PC-3 (cell line): ENCODE measurements at regions of chr2 and their contacts with region 1.

Region 1: DNA sequence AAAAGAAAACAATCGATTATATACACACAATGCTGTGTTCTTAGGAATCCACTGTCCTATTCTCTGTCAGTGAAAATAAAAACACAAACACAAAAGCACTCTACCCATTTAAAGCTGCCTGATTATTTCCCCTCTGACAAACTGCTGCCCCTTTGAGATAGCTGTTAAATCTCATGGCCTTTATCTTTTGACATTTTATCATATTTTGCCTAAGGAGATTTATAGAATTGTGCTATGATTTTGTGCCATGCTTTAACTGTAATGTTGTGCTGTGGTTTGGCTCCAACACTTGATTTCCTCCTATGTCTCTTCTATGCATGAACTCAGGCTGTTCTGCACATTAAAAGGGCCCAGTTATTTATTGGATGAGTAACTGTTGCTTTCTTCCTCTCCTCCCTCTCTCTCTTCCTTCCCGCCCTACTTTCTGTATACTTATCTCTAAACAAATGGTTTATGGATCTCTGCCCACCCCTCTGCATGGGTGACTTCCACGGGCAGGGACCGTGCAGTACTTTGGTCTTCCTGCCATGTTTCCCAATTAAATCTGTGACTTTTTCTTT is 1096.6 kb downstream of the TSN start:
- DNase-seq: peak; percentile 87
- ATAC-seq: peak; percentile 74
- H3K4me3 ChIP-seq: no peak overlapping the region
- H3K27ac ChIP-seq: peak overlapping the region; percentile 85
- H3K4me1 ChIP-seq: peaks cover 50% of the 10 kb centered on the region
- H3K27me3 ChIP-seq: no peaks in the 10 kb centered on the region
- CTCF ChIP-seq: no peak

Region 2: DNA sequence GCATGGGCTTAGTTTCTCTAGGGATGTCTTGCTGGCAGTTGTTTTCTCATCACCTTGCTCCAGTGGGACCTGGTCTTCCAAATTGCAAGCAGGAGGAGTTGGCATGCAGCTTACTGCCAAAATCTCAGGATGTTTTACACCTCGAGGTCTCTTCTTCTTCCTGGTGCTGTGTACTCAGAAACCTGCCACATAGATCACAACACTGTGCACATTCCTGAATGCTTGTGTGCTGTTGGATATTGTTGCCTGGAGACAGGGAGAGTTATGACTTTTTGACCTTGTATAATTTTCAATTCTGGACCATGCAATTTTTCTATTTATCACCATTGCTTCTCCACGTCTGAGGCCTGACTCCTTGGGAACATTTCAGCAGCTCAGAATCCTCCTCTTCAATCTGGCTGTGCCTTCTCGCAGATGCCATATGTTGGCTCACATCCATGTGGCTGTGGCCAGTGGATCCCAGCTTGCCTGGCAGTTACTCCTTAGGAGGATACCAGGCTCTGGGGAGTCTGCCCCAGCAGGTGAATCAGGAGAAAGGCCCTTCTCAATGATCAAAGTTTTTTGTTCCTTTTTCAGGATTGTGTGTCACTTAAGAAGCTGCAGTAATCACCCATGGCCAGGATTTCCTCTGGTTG is 607.3 kb before region 1 on chr2:
- CTCF ChIA-PET with region 1: no interaction called
- POLR2A ChIA-PET with region 1: no interaction called
- intact Hi-C with region 1: no loop called
- DNase-seq: no peak
- ATAC-seq: no peak
- H3K4me3 ChIP-seq: no peak overlapping the region
- H3K27ac ChIP-seq: no peak overlapping the region
- H3K4me1 ChIP-seq: no peaks in the 10 kb centered on the region
- H3K27me3 ChIP-seq: peaks cover 7% of the 10 kb centered on the region; the same call in 1 of the 2 replicates
- CTCF ChIP-seq: no peak

Region 3: GRCh38 chr2:122543815-122544214 is 308.2 kb before region 1 on chr2:
- CTCF ChIA-PET with region 1: no interaction called
- POLR2A ChIA-PET with region 1: interaction called, 18 read pairs
- intact Hi-C with region 1: no loop called
- DNase-seq: peak; percentile 28
- ATAC-seq: no peak
- H3K4me3 ChIP-seq: no peak overlapping the region
- H3K27ac ChIP-seq: no peak overlapping the region
- H3K4me1 ChIP-seq: no peaks in the 10 kb centered on the region
- H3K27me3 ChIP-seq: no peaks in the 10 kb centered on the region
- CTCF ChIP-seq: no peak

Region 4: GRCh38 chr2:122831649-122832048 is 20.4 kb before region 1 on chr2:
- CTCF ChIA-PET with region 1: no interaction called
- POLR2A ChIA-PET with region 1: no interaction called
- intact Hi-C with region 1: loop called (anchors 2 kb)
- DNase-seq: peak; percentile 93
- ATAC-seq: peak; percentile 90
- H3K4me3 ChIP-seq: no peak overlapping the region
- H3K27ac ChIP-seq: peak overlapping the region; percentile 45
- H3K4me1 ChIP-seq: peaks cover 28% of the 10 kb centered on the region
- H3K27me3 ChIP-seq: no peaks in the 10 kb centered on the region
- CTCF ChIP-seq: no peak

Region 5: GRCh38 chr2:123095219-123095835 is 243.3 kb after region 1 on chr2:
- CTCF ChIA-PET with region 1: no interaction called
- POLR2A ChIA-PET with region 1: no interaction called
- intact Hi-C with region 1: loop called (anchors 5 kb)
- DNase-seq: no peak
- ATAC-seq: no peak
- H3K4me3 ChIP-seq: no peak overlapping the region
- H3K27ac ChIP-seq: no peak overlapping the region
- H3K4me1 ChIP-seq: peaks cover 38% of the 10 kb centered on the region
- H3K27me3 ChIP-seq: no peaks in the 10 kb centered on the region
- CTCF ChIP-seq: no peak

Region 6: DNA sequence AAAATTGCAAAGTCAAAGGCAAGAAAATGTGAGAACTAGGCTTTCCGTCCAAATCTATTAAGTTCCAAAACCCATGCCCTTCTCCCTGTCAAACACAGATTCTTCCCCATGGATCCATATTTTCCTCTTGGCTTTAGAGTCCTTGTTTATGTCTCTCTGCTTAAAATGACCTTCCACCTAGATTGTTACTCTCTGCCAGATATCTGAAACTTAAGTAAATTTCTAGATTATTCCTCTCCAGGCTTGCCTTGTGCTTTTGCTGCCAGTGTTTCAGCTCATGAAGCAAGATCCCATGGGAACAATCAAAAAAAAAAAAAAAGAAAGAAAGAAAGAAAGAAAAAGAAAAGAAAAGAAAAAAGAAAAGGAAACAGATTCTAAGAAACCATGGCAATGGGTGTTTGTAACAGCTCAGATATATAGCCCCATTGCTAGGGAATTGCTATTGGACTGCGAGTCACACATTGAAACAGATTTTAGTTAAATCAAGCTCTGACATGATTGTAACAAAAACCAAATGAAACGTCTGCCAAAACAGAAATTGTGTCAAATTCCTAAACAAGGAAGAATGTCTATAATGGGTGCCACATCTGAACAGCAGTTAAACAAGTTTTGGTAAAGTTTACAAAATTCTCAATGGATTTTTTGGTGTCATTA is 512.3 kb after region 1 on chr2:
- CTCF ChIA-PET with region 1: no interaction called
- POLR2A ChIA-PET with region 1: no interaction called
- intact Hi-C with region 1: loop called (anchors 1 kb)
- DNase-seq: no peak
- ATAC-seq: peak; percentile 8; the same call in 1 of the 2 replicates
- H3K4me3 ChIP-seq: no peak overlapping the region
- H3K27ac ChIP-seq: peak overlapping the region; percentile 14; the same call in 1 of the 2 replicates
- H3K4me1 ChIP-seq: peaks cover 19% of the 10 kb centered on the region
- H3K27me3 ChIP-seq: no peaks in the 10 kb centered on the region
- CTCF ChIP-seq: no peak